ENCODE measurements at regions of chr12 and their contacts with region 1.

Region 1: GRCh38 chr12:59808317-59808910 is 212.6 kb downstream of the SLC16A7 start:
- DNase-seq: peak; percentile 49
- ATAC-seq: peak; percentile 67
- H3K4me3 ChIP-seq: no peak overlapping the region
- H3K4me3 Mint-ChIP-seq: no peak overlapping the region
- H3K27ac ChIP-seq: no peak overlapping the region
- H3K27ac Mint-ChIP-seq: no peak overlapping the region
- H3K4me1 ChIP-seq: no peaks in the 10 kb centered on the region
- H3K4me1 Mint-ChIP-seq: peaks cover 5% of the 10 kb centered on the region
- H3K27me3 ChIP-seq: no peaks in the 10 kb centered on the region
- H3K27me3 Mint-ChIP-seq: no peaks in the 10 kb centered on the region
- CTCF ChIP-seq: peak; percentile 94

Region 2: DNA sequence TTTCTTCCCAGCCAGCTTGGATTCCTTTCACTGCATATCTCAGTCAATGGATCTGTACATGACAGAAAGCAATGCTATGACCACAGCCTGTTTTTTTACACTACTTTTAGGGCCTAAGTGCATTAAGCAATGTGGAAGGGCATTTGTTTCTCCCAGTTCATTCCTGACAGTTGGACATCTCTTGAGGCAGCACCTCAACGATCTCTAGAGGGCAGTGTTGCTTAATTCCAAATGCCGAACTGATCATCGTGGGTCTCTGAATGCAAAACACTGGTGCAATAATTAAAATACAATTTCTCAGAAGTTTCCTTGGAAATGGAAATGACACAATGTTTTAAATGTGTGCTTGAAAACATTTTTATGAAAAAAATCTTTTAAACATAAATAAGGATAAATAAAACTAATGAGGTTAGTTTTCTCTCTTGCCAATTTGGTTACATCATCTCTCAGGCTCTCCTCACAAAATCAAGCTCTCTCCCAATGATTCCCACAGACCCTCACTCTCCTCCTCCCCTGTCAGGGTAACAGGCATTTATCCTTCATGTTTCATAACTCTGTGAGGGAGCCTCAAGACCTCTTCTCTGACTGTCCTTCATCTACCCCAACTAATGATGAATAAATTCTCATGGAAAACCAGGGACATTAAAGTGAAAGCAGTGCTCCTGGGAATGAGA is 405.0 kb before region 1 on chr12:
- CTCF ChIA-PET with region 1: interaction called, 44 read pairs
- POLR2A ChIA-PET with region 1: no interaction called
- intact Hi-C with region 1: loop called (anchors 1 kb)
- DNase-seq: peak; percentile 54
- ATAC-seq: no peak
- H3K4me3 ChIP-seq: no peak overlapping the region
- H3K4me3 Mint-ChIP-seq: no peak overlapping the region
- H3K27ac ChIP-seq: no peak overlapping the region
- H3K27ac Mint-ChIP-seq: no peak overlapping the region
- H3K4me1 ChIP-seq: no peaks in the 10 kb centered on the region
- H3K4me1 Mint-ChIP-seq: peaks cover 2% of the 10 kb centered on the region
- H3K27me3 ChIP-seq: peaks cover 0 to 4% (median 0%) of the 10 kb centered on the region in 4 experiments
- H3K27me3 Mint-ChIP-seq: no peaks in the 10 kb centered on the region
- CTCF ChIP-seq: peak; percentile 83

Region 3: GRCh38 chr12:59444932-59445331 is 363.5 kb before region 1 on chr12:
- CTCF ChIA-PET with region 1: interaction called, 16 read pairs
- POLR2A ChIA-PET with region 1: no interaction called
- intact Hi-C with region 1: loop called (anchors 1 kb)
- DNase-seq: peak; percentile 39
- ATAC-seq: no peak
- H3K4me3 ChIP-seq: no peak overlapping the region
- H3K4me3 Mint-ChIP-seq: no peak overlapping the region
- H3K27ac ChIP-seq: no peak overlapping the region
- H3K27ac Mint-ChIP-seq: no peak overlapping the region
- H3K4me1 ChIP-seq: no peaks in the 10 kb centered on the region
- H3K4me1 Mint-ChIP-seq: no peaks in the 10 kb centered on the region
- H3K27me3 ChIP-seq: no peaks in the 10 kb centered on the region
- H3K27me3 Mint-ChIP-seq: peaks cover 4% of the 10 kb centered on the region
- CTCF ChIP-seq: peak; percentile 54

Region 4: GRCh38 chr12:59736822-59737221 is 71.6 kb before region 1 on chr12:
- CTCF ChIA-PET with region 1: no interaction called
- POLR2A ChIA-PET with region 1: no interaction called
- intact Hi-C with region 1: no loop called
- DNase-seq: no peak
- ATAC-seq: no peak
- H3K4me3 ChIP-seq: no peak overlapping the region
- H3K4me3 Mint-ChIP-seq: no peak overlapping the region
- H3K27ac ChIP-seq: no peak overlapping the region
- H3K27ac Mint-ChIP-seq: no peak overlapping the region
- H3K4me1 ChIP-seq: no peaks in the 10 kb centered on the region
- H3K4me1 Mint-ChIP-seq: peaks cover 11% of the 10 kb centered on the region
- H3K27me3 ChIP-seq: no peaks in the 10 kb centered on the region
- H3K27me3 Mint-ChIP-seq: no peaks in the 10 kb centered on the region
- CTCF ChIP-seq: no peak

Measured in B cell (primary cell).